Ovary (tissue), 10 donors: ENCODE measurements at regions of chr10 and their contacts with region 1.

Region 1: DNA sequence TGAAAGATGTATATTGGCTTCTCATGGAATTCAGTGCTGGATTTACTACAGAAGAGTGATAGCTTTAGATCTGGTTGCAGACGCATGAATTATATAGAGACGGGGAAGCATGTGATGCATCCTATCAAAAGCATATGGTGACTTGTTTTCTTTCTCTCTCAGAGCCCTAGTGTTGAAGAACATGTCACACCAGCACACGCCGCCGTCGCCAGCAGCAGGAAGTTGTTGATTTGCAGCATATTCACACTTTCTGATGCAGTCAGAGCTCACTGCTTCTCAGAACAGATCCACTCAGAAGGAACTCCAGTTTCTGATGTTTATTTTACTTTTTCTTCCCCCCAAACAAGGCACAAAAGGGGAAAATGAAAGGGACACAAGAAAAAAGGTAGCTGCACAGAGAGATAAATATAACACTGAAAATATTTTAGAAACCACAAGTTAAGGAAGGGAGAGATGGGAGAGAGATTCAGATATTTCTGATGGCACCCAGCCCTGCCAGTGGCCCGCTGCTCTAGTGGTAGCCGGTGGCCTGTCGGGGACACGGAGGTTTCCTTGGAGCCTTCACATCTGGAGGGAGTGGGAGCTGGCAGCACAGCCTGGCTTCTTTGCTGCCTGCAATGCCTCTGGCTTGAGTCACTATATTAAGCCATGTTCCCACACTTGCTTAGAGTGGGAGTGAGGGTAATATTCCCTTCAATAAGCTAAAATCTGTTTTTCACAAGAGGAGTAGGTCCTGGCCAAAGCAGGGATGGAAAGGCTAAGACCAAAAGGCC is 123.2 kb downstream of the NRP1 start:
- DNase-seq: peak; percentile 50 to 73 (median 61)
- H3K4me3 ChIP-seq: no peak overlapping the region
- H3K27ac ChIP-seq: peak overlapping the region in 1 of 2 donors; percentile 27
- H3K4me1 ChIP-seq: peaks cover 6% of the 10 kb centered on the region
- H3K27me3 ChIP-seq: no peaks in the 10 kb centered on the region
- CTCF ChIP-seq: no peak
- EP300 ChIP-seq: no peak
- POLR2A ChIP-seq: no peak

Region 2: DNA sequence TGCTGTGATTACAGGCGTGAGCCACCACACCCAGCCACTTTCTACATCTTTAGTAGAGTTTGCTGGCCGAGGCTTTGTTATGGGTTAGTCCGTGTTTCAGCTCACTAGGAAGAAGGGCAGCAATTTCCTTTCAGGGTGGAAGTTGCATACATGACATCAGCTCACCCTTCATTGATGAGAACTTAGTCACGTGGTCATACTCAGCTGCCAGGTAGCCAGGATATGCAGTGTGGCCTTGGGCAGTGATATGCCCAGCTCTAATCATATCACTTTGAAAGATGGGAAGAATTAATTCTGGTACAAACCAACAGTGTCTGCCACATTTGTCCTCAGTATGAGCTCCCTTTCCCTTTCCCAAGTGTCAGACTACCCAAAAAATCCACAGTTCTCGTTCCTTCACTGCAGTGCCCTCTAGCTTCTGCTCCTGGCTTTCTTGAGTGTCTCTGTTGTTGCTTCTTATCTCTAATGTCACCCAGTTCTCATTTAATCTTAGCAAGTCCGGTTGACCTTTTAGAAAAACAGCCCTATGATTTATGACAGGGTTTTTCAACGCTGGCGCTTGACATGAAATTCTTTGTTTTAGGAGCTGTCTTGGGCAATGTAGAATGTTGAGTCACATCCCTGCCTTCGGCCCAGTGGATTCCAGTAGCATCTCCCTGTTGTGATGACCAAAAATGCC is 144.6 kb before region 1 on chr10:
- intact Hi-C with region 1: no loop called
- DNase-seq: no peak
- H3K4me3 ChIP-seq: no peak overlapping the region
- H3K27ac ChIP-seq: no peak overlapping the region
- H3K4me1 ChIP-seq: no peaks in the 10 kb centered on the region
- H3K27me3 ChIP-seq: no peaks in the 10 kb centered on the region
- CTCF ChIP-seq: no peak
- EP300 ChIP-seq: no peak
- POLR2A ChIP-seq: no peak

Region 3: GRCh38 chr10:33263453-33263852 is 52.2 kb after region 1 on chr10:
- intact Hi-C with region 1: loop called in 1 of 4 experiments (anchors 10 kb)
- DNase-seq: no peak
- H3K4me3 ChIP-seq: no peak overlapping the region
- H3K27ac ChIP-seq: no peak overlapping the region
- H3K4me1 ChIP-seq: no peaks in the 10 kb centered on the region
- H3K27me3 ChIP-seq: no peaks in the 10 kb centered on the region
- CTCF ChIP-seq: no peak
- EP300 ChIP-seq: no peak
- POLR2A ChIP-seq: no peak

Region 4: DNA sequence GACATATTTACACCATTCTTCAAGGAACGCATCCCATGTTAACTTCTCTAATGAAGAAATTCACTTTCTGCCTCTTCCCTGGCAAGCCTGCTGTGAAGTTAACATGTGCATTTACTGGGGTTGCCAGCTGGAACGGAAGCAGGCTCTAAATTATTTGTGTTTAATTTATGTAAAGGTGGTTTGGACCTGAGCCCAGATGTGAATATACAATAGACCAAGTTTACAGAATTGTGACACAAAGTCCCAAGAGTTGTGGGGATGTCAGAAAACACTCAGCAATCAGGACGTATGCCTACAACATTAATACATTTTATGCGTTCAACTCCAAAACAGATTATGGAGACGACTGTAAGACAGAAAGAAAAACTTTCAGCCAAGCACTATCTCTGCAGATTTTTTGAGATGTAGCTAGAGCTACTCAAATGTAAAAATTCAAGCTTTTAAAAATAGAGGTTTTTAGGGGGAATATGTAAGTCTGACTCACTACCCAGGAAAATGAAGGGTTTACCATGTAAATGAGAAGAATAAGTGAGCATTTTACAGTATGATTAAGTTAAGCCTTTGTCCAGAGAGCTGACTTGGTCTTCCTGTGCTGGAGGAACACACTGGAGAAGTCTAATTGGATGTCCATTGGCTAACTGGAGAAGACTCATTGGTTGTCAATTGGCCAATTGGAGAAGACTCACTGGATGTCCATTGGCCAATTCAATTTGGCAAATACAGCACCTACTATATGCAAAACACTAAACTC is 103.7 kb after region 1 on chr10:
- intact Hi-C with region 1: no loop called
- DNase-seq: no peak
- H3K4me3 ChIP-seq: no peak overlapping the region
- H3K27ac ChIP-seq: no peak overlapping the region
- H3K4me1 ChIP-seq: peaks cover 13% of the 10 kb centered on the region
- H3K27me3 ChIP-seq: no peaks in the 10 kb centered on the region
- CTCF ChIP-seq: no peak
- EP300 ChIP-seq: no peak
- POLR2A ChIP-seq: no peak